BJ (cell line): ENCODE measurements at regions of chr1 and their contacts with region 1.

Region 1: DNA sequence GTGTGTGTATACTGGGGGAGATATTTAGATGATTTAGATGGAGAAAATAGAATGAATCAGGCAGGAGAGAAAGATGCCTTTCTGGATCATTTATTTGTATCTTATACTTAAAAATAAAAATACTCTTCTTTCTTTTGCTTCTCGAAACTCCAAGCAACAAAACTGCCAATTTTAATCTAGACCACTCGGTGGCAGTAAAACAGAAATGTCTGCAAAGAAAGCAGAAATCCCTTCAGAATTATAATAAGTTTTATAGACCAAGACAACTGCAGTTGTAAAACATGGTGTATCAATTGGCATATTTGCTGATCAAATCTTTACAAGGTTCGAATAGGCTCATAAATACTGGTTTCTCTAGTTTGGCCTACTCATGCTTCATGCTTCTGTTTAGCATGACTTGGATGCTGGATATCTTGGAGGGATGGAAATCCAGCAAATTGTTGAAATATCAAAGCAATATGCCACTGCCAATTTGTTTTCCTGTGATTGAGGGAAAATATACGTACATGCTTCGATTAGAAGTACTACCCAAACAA is 15.1 kb upstream of the C1orf87 start:
- DNase-seq: no peak
- H3K4me3 ChIP-seq: no peak overlapping the region
- H3K27me3 ChIP-seq: no peaks in the 10 kb centered on the region
- CTCF ChIP-seq: 0 out of 2 replicates have a peak, but pooled peaks have one; percentile 21

Region 2: GRCh38 chr1:59653968-59654367 is 434.7 kb before region 1 on chr1:
- CTCF ChIA-PET with region 1: no interaction called
- POLR2A ChIA-PET with region 1: no interaction called
- DNase-seq: no peak
- H3K4me3 ChIP-seq: no peak overlapping the region
- H3K27me3 ChIP-seq: no peaks in the 10 kb centered on the region
- CTCF ChIP-seq: no peak

Region 3: GRCh38 chr1:60765204-60765603 is 676.5 kb after region 1 on chr1:
- CTCF ChIA-PET with region 1: no interaction called
- POLR2A ChIA-PET with region 1: interaction called, 22 read pairs
- DNase-seq: no peak
- H3K4me3 ChIP-seq: no peak overlapping the region
- H3K27me3 ChIP-seq: no peaks in the 10 kb centered on the region
- CTCF ChIP-seq: peak; percentile 55